K562 (cell line): ENCODE measurements at regions of chr4 and their contacts with region 1.

Region 1: DNA sequence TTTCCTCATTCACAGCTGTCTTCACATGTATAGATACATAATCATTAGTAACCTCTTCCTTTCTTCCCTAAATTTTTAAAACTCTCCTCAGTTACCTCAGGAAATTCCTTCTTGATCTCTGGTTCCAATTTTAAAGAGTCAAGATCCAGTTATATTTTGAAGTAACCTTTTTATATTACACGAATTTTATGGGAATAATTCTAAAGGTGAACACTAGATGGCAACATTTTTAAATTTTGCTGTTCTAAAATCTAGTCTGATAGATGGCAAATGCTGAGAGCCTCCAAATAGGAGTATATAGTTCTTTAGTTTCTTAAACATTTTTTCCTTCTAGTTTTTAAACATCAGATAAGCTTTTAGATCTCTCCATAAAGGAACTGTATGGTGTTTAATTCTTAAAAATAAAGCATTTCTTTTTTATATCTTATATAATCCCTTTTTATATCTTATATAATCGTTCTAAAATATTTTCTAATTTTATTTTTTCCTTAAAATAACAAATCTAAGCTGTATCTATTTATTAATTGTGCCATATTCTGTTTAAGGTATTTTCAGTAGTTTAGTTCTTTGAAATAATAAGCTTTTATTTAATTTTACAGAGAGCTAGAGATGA is 37.9 kb upstream of the PAPSS1 start:
- DNase-seq: peak in 3 of 4 experiments; percentile 15 to 23 (median 18)
- ATAC-seq: 0 out of 3 replicates have a peak, but pooled peaks have one; percentile 36
- H3K4me3 ChIP-seq: no peak overlapping the region
- H3K27ac ChIP-seq: no peak overlapping the region
- H3K4me1 ChIP-seq: no peaks in the 10 kb centered on the region
- H3K27me3 ChIP-seq: no peaks in the 10 kb centered on the region
- CTCF ChIP-seq: peak in 2 of 3 experiments; percentile 28 to 47; a peak in 3 of 6 replicates
- EP300 ChIP-seq: no peak
- POLR2A ChIP-seq: no peak
- RAD21 ChIP-seq: peak; percentile 37 to 54; a peak in 3 of 4 replicates

Region 2: GRCh38 chr4:107913281-107913899 is 155.4 kb after region 1 on chr4:
- CTCF ChIA-PET with region 1: interaction called, 12 read pairs
- POLR2A ChIA-PET with region 1: no interaction called
- in situ Hi-C with region 1: loop called (anchors 25 kb)
- intact Hi-C with region 1: loop called (anchors 1 kb)
- DNase-seq: peak; percentile 49 to 76 (median 52)
- ATAC-seq: peak; percentile 90
- H3K4me3 ChIP-seq: no peak overlapping the region
- H3K27ac ChIP-seq: no peak overlapping the region
- H3K4me1 ChIP-seq: no peaks in the 10 kb centered on the region
- H3K27me3 ChIP-seq: peaks cover 0 to 2% of the 10 kb centered on the region in 2 experiments; a peak in 1 of 5 replicates
- CTCF ChIP-seq: peak; percentile 66 to 80 (median 66)
- EP300 ChIP-seq: no peak
- POLR2A ChIP-seq: no peak
- RAD21 ChIP-seq: peak; percentile 81 to 82